ENCODE measurements at regions of chr11 and their contacts with region 1.

Region 1: GRCh38 chr11:112086422-112087191 is at the starts of genes SDHD and TIMM8B:
- DNase-seq: peak; percentile 98
- H3K4me3 Mint-ChIP-seq: peak within 1 kb of the TSS; percentile 97
- H3K27ac Mint-ChIP-seq: peak within 1 kb of the TSS; percentile 93
- H3K4me1 Mint-ChIP-seq: peaks cover 67% of the 10 kb centered on the region
- H3K27me3 Mint-ChIP-seq: no peaks in the 10 kb centered on the region
- total RNA-seq, gene SDHD: 101 to 115 TPM
- total RNA-seq, gene TIMM8B: 35.4 to 41.7 TPM

Region 2: DNA sequence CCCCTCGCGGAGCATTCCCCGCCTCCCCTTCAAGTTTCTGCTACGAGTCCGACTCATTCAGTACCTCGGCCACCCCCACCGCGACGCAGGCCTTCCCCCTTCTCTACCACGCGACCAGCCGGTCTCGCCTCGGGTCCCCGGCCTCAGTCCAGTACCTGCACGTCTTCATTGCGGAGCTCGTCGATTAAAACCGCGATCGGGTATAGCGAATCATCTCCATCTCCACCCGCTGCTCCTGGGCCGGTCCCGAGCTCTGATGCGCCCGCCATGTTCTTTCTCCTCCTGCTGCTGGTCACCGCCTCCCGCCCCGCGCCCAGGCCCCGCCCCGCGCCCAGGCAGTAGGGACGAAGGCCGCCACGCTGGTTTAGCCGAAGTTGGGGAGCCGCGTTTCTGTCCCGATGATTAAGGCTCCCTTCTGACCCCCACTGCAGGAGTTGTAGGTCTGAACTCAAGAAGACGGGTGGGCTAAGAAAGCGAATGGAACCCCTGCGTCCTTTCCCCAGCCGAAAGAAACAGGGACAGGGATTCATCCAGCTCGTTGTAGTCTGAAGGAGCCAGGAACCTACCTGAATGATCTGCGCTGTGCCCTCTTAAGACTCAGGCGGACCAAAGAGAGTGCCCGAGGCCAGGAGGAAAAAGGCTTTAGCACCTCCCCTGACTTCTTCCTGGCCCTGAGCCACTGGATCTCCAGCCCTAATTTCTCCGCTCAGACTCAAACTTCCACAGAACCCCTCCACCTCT is 320.3 kb before region 1 on chr11 and contains the start of gene PPP2R1B:
- CTCF ChIA-PET with region 1: no interaction called
- intact Hi-C with region 1: loop called (anchors 5 kb)
- DNase-seq: peak; percentile 78
- H3K4me3 Mint-ChIP-seq: peak within 1 kb of the TSS; percentile 100
- H3K27ac Mint-ChIP-seq: peak within 1 kb of the TSS; percentile 96
- H3K4me1 Mint-ChIP-seq: peaks cover 33% of the 10 kb centered on the region
- H3K27me3 Mint-ChIP-seq: no peaks in the 10 kb centered on the region
- total RNA-seq, gene PPP2R1B: 36.7 to 43.8 TPM

Region 3: DNA sequence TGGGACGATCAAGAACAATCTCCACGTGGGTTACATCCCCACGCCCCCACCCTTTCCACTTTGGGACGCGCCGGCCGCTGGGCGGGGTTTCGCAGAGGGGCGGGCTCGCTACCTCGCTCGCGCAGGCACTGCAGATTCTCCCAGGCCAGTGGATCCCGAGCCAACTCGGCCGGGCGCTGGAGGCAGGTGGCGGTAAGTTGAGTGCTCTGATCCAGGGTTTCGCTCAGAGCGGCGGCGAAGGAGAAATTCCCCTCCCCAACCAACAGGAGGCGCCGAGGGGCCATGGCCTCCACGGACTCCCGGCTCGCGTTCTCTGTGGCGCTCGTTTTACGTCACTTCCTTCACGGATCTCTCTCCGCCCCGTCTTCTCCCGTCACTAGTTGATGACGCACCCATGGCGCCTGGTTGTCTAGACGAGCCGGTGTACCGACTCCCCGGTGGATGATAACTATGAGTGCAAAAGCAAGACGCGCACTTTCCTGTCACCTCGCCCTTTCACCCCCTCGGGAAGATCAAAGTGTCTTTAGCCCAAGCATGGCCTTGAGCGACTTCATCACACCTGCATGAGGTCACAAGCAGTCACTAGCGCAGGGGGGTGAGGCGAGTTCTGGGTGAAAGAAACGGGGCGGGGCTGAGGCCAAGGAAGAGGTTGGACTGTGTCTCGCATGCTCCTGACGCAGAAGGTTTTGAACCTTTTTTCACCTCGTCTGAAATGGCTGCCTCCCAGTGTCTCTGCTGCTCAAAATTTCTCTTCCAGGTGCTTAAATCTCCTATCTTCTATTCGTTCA is 207.6 kb before region 1 on chr11 and contains the starts of genes CFAP68 and FDXACB1:
- CTCF ChIA-PET with region 1: no interaction called
- intact Hi-C with region 1: loop called (anchors 1 kb)
- DNase-seq: peak; percentile 97
- H3K4me3 Mint-ChIP-seq: peak within 1 kb of the TSS; percentile 98
- H3K27ac Mint-ChIP-seq: peak within 1 kb of the TSS; percentile 97
- H3K4me1 Mint-ChIP-seq: peaks cover 39% of the 10 kb centered on the region
- H3K27me3 Mint-ChIP-seq: no peaks in the 10 kb centered on the region
- total RNA-seq, gene CFAP68: 31.5 to 33.2 TPM
- total RNA-seq, gene FDXACB1: 3.4 to 3.8 TPM

Region 4: DNA sequence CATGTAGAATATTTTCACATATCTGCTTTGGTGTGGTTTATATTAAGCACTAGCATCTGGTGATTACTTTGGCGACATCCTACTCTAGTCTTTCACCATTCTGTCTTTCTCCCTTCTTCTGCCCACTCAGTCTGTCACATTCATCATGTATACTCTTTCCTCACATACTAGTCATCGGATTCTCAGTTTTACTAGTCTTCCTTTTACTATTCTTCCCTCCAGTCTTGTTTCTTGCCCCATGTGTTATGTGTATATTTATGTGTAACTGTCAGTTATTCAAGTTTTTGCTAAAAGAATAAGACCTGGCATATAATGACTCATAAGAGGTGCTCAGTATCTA is 154.0 kb before region 1 on chr11:
- CTCF ChIA-PET with region 1: interaction called, 7 read pairs
- intact Hi-C with region 1: loop called (anchors 1 kb)
- DNase-seq: no peak
- H3K4me3 Mint-ChIP-seq: no peak overlapping the region
- H3K27ac Mint-ChIP-seq: peak overlapping the region; percentile 68
- H3K4me1 Mint-ChIP-seq: peaks cover 36% of the 10 kb centered on the region
- H3K27me3 Mint-ChIP-seq: no peaks in the 10 kb centered on the region

Region 5: GRCh38 chr11:112049747-112050146 is 36.9 kb before region 1 on chr11:
- CTCF ChIA-PET with region 1: interaction called, 3 read pairs
- intact Hi-C with region 1: loop called (anchors 2 kb)
- DNase-seq: no peak
- H3K4me3 Mint-ChIP-seq: no peak overlapping the region
- H3K27ac Mint-ChIP-seq: no peak overlapping the region
- H3K4me1 Mint-ChIP-seq: peaks cover 23% of the 10 kb centered on the region
- H3K27me3 Mint-ChIP-seq: no peaks in the 10 kb centered on the region

Region 6: GRCh38 chr11:112074026-112074811 is 12.4 kb before region 1 on chr11 and contains the start of gene NKAPD1:
- CTCF ChIA-PET with region 1: interaction called, 4 read pairs
- intact Hi-C with region 1: loop called (anchors 1 kb)
- DNase-seq: peak; percentile 86
- H3K4me3 Mint-ChIP-seq: peak within 1 kb of the TSS; percentile 97
- H3K27ac Mint-ChIP-seq: peak within 1 kb of the TSS; percentile 97
- H3K4me1 Mint-ChIP-seq: peaks cover 28% of the 10 kb centered on the region
- H3K27me3 Mint-ChIP-seq: peaks cover 6% of the 10 kb centered on the region
- total RNA-seq, gene NKAPD1: 14.8 to 19.6 TPM

Region 7: DNA sequence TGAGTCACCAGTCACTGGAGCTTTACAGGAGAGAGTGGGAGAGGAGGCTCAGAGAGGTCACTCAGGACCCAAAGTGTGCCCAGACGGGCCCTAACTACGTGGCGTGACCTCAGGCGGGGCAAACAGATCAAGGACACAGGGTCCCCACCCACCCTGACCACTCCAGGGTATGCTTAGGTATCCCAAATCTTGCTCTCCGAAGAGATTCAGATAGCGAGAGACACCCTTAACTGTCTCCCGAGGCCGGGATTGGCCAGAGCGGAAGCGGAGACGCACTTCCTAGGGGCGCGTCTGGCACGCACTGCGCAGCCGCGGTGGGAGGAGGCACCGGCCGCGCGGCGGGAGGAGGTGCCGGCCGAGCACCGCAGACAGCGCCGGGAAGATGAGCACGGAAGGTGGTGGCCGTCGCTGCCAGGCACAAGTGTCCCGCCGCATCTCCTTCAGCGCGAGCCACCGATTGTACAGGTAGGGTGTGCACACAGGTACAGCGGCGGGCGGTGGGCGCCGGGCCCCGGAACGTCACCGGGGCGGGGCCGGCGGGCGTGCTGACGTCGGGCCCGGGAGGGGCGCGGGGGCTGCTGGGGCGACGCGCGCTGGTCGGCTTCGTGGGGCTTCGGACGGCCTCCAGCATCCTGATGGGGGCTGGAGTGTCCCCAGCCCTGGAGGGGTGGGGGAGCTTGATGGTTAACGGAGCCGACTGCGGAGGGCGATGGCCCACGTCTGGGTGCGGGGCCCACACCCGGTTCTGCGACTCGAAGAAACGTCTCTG is 139.6 kb after region 1 on chr11 and contains the start of gene PTS:
- CTCF ChIA-PET with region 1: no interaction called
- intact Hi-C with region 1: loop called (anchors 1 kb)
- DNase-seq: peak; percentile 86
- H3K4me3 Mint-ChIP-seq: peak within 1 kb of the TSS; percentile 88
- H3K27ac Mint-ChIP-seq: peak within 1 kb of the TSS; percentile 91
- H3K4me1 Mint-ChIP-seq: peaks cover 17% of the 10 kb centered on the region
- H3K27me3 Mint-ChIP-seq: no peaks in the 10 kb centered on the region
- total RNA-seq, gene PTS: 34.6 to 39.0 TPM

Region 8: DNA sequence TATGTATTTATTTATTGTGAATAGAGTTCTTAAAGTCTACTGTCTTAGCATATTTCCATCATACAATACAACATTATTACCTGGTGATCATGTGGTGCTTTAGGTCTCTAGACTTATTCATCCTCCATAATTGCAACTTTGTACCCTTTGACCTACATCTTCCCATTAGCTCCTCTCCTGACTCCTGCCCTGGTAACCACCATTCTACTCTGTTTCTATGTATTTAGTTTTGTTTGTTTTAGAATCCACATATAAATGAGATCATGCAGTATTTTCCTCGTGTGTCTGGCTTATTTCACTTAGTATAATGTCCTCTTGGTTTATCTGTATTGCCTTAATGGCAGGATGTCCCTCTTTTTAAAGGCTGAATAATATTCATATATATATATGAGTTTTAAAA is 897.3 kb after region 1 on chr11:
- CTCF ChIA-PET with region 1: no interaction called
- intact Hi-C with region 1: no loop called
- DNase-seq: no peak
- H3K4me3 Mint-ChIP-seq: no peak overlapping the region
- H3K27ac Mint-ChIP-seq: no peak overlapping the region
- H3K4me1 Mint-ChIP-seq: no peaks in the 10 kb centered on the region
- H3K27me3 Mint-ChIP-seq: peaks cover 3% of the 10 kb centered on the region

Measured in activated naive CD4-positive, alpha-beta T cell treated with anti-CD3 and anti-CD28 coated beads for 36 hours (primary cell).